Activated CD4-positive, alpha-beta T cell treated with anti-CD3 and anti-CD28 coated beads for 36 hours (primary cell): ENCODE measurements at regions of chr17 and their contacts with region 1.

Region 1: DNA sequence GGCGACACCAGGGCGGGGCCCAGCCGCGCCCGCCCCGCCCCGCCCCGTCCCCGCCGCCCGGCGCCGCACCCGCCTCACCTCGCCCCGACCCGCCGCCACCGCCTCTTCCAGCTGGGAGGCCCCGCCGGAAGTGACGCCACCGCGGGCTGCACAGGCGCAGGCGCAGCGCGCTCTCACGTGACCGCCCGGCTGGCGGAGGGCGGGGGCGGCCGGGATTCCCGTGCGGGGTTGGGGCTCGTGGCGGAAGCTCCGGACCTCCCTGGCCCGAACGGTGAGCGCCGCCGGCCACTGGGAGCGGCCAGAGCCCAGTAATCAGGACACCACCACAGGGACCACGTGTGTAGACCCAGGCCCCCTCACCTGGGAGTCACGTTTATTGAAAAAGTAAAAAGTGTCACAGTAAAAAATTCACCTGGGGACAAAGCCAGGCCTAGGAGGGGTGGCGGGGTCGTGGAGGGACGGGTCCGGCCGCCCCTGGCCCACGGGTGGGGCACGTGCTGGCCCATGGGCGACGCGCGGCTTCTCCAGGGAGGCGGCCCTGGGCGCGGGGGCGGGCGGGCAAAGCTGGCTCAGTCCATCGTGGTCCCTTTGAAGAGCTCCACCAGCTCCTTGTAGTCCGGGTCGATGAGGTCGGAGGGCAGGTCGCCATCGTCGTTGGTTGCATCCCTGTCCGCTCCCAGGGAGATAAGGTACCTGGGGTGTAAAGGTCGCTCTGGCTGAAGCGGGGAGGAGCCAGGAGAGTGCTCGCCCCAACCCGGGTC is at the start of gene MCRIP1:
- DNase-seq: peak; percentile 98
- ATAC-seq: peak; percentile 78
- H3K4me3 Mint-ChIP-seq: peak within 1 kb of the TSS; percentile 87
- H3K27ac Mint-ChIP-seq: peak within 1 kb of the TSS; percentile 91
- H3K4me1 Mint-ChIP-seq: peaks cover 17% of the 10 kb centered on the region
- H3K27me3 Mint-ChIP-seq: no peaks in the 10 kb centered on the region
- total RNA-seq, gene MCRIP1: 45.8 to 50.4 TPM

Region 2: GRCh38 chr17:81346090-81346907 is 487.0 kb before region 1 on chr17:
- CTCF ChIA-PET with region 1: no interaction called
- POLR2A ChIA-PET with region 1: no interaction called
- intact Hi-C with region 1: loop called in 1 of 2 experiments (anchors 2 kb)
- DNase-seq: peak; percentile 98
- ATAC-seq: peak; percentile 93
- H3K4me3 Mint-ChIP-seq: peak overlapping the region; percentile 26
- H3K27ac Mint-ChIP-seq: no peak overlapping the region
- H3K4me1 Mint-ChIP-seq: peaks cover 19% of the 10 kb centered on the region
- H3K27me3 Mint-ChIP-seq: peaks cover 25% of the 10 kb centered on the region

Region 3: GRCh38 chr17:81508639-81509206 is 324.6 kb before region 1 on chr17:
- CTCF ChIA-PET with region 1: no interaction called
- POLR2A ChIA-PET with region 1: no interaction called
- intact Hi-C with region 1: no loop called
- DNase-seq: peak; percentile 22
- ATAC-seq: no peak
- H3K4me3 Mint-ChIP-seq: peak overlapping the region; percentile 97
- H3K27ac Mint-ChIP-seq: peak overlapping the region; percentile 86
- H3K4me1 Mint-ChIP-seq: peaks cover 12% of the 10 kb centered on the region
- H3K27me3 Mint-ChIP-seq: no peaks in the 10 kb centered on the region

Region 4: DNA sequence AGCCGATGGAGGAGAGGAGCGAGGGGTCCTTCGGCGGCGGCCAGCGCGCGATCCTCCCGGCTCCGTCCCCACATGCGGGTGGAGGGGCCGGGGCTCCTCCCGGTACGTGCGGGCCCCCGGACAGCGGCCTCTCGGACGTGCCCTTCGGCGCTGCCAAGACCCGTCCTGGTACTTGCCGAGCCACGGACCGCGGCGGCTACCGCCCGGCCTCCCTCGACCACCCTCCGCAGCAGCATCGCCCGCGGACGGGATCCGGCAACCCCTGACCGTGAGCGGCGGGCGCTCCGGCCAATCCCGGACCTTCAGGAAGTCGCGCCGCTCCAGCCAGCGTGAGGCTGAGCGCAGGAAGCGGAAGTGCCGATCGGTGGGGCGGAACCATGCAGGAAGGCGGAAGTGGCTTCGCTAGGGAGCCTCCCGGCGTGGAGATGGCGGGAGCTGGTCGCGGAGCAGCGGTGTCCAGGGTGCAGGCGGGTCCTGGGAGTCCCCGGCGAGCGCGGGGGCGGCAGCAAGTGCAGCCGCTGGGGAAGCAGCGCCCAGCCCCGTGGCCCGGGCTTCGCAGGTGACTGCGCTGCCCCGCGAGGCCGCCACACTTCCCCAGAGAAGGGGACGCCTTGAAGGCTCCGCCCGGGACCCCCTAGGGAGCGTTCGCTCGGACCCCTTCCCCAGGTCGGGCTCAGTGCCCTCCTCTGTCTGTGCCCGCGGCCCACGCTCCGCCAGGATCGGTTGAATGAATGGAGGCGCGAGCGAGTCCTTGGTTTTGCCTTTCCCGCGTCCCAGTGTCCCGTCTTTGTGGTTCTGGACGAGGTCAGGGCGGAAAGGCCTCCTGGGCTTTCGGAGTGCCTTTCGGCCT is 166.8 kb before region 1 on chr17 and contains the starts of genes CCDC137 and OXLD1:
- CTCF ChIA-PET with region 1: interaction called, 3 read pairs
- POLR2A ChIA-PET with region 1: no interaction called
- intact Hi-C with region 1: loop called in 1 of 2 experiments (anchors 1 kb)
- DNase-seq: peak; percentile 97
- ATAC-seq: peak; percentile 91
- H3K4me3 Mint-ChIP-seq: peak within 1 kb of the TSS; percentile 91
- H3K27ac Mint-ChIP-seq: peak within 1 kb of the TSS; percentile 97
- H3K4me1 Mint-ChIP-seq: peaks cover 53% of the 10 kb centered on the region
- H3K27me3 Mint-ChIP-seq: no peaks in the 10 kb centered on the region
- total RNA-seq, gene CCDC137: 30.0 to 36.6 TPM
- total RNA-seq, gene OXLD1: 29.4 to 45.3 TPM

Region 5: GRCh38 chr17:81733507-81734404 is 99.6 kb before region 1 on chr17:
- CTCF ChIA-PET with region 1: interaction called, 3 read pairs
- POLR2A ChIA-PET with region 1: interaction called, 3 read pairs
- intact Hi-C with region 1: loop called in 1 of 2 experiments (anchors 1 kb)
- DNase-seq: peak; percentile 87
- ATAC-seq: peak; percentile 96
- H3K4me3 Mint-ChIP-seq: no peak overlapping the region
- H3K27ac Mint-ChIP-seq: no peak overlapping the region
- H3K4me1 Mint-ChIP-seq: peaks cover 7% of the 10 kb centered on the region
- H3K27me3 Mint-ChIP-seq: peaks cover 16% of the 10 kb centered on the region

Region 6: DNA sequence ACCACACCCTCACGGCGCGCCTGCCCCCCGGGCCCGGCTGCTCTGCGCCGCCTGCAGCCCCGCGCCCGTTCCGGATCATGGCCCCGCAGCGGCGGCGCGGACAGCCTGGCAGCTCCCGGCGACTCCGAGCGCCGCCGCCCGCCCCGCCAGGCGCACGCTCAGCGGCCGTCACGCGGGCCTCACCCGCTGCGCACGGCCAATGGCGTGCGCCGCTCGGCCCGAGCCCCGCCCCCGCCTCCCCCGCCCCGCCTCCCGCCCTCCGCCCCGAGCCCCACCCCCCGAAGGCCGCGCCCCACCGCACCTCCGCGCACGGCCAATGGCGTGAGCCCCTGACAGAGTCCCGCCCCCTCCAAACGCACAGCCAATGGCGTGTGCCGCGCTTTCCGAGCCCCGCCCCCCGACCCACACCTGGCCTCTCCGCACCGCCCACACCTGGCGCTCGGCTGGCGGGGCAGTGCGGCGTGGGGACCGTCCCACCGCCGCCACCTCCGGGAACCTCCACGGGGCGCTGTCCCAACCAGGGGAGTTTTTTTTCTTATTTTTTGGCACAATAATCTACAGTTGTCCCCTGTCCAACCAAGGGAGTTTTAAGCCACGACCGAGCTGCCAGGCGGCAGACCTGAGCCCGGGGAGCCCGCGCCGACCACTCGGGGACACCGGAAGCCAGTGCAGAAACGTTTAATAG is 78.1 kb after region 1 on chr17 and contains the start of gene PCYT2:
- CTCF ChIA-PET with region 1: no interaction called
- POLR2A ChIA-PET with region 1: no interaction called
- intact Hi-C with region 1: loop called in 1 of 2 experiments (anchors 1 kb)
- DNase-seq: peak; percentile 97
- ATAC-seq: peak; percentile 96
- H3K4me3 Mint-ChIP-seq: peak within 1 kb of the TSS; percentile 79
- H3K27ac Mint-ChIP-seq: no peak within 1 kb of the TSS
- H3K4me1 Mint-ChIP-seq: peaks cover 14% of the 10 kb centered on the region
- H3K27me3 Mint-ChIP-seq: no peaks in the 10 kb centered on the region
- total RNA-seq, gene PCYT2: 19.7 to 24.0 TPM

Region 7: DNA sequence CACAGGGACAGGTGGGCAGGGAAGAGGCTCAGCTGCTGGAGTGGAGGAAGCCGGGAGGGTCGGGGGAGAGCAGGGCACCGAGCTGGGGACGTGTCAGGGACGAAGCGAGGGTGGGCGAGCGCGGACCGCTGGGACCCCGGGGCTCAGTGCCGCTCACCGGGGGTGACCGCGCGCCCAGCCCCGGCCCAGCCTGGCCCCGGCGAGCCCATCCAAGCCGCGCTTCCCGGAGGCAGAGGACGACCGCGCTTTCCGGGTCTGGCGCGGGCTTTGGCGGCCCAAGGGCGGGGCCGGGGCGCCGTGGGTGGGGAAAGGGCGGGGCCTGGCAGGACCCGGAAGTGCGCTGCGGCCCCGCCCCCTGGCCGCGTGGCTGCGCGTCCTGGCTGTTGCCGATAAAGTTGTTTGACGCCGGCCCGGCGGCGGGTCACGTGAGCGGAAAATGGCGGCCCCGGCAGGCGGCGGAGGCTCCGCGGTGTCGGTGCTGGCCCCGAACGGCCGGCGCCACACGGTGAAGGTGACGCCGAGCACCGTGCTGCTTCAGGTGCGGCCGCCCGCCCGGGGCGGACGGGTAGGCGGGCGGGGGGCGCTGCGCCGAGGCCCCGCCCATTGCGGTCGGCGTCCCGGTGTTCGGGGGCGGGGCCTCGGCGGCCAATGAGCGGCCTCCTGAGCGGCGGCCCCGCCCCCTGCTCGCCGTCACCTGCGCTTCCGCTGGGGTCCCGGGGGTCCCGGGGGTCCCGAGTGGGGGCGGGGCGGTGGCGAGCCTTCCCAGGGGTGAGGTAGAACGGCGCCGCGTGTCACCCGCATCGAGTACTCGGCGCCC is 144.1 kb after region 1 on chr17 and contains the start of gene ASPSCR1:
- CTCF ChIA-PET with region 1: no interaction called
- POLR2A ChIA-PET with region 1: no interaction called
- intact Hi-C with region 1: loop called in 1 of 2 experiments (anchors 1 kb)
- DNase-seq: peak; percentile 95
- ATAC-seq: peak; percentile 83
- H3K4me3 Mint-ChIP-seq: peak within 1 kb of the TSS; percentile 94
- H3K27ac Mint-ChIP-seq: peak within 1 kb of the TSS; percentile 98
- H3K4me1 Mint-ChIP-seq: peaks cover 32% of the 10 kb centered on the region
- H3K27me3 Mint-ChIP-seq: no peaks in the 10 kb centered on the region
- total RNA-seq, gene ASPSCR1: 23.3 to 26.5 TPM

Region 8: DNA sequence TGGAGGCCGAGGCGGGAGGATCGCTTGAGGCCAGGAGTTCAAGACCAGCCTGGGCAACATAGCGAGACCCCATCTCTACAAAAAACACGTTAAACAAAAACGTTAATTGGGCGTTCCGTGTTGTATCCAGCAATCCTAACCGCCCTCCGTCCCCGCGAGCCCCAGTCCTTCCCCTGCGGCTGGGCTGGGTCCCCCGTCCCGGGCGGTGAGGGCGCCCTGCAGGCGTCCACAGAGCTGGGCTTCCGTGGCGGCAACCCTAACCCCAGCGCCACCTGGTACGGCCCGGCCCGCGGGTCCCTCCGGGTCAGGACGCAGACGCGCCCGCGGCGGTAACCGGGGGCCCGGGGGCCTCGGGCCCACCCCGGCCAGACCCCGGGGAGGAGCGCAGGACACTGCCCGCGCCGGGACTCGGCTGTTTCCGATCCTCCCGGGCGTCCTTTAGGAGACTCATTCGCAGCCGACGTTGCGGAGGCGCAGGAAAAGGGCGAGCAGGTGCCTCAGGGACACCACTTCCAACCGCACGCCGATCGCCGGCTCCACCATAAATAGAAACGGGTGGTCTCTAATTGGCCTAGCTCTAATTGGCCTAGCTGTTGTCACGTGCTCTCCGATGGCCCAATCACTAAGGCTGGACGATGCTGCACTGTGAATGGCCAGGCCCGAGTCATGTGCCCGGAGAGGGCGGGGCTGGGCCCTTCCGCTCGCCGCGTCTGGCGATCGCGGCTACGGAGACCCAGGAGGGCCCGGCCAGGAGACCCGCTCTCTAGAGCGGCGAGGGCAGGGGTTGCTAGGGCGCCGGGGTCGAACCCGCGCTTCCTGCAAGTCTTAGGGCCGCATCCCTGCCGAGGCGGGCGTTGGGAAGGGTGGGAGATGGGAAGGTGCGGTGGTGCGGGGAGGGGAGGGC is 459.2 kb after region 1 on chr17:
- CTCF ChIA-PET with region 1: no interaction called
- POLR2A ChIA-PET with region 1: no interaction called
- intact Hi-C with region 1: loop called in 1 of 2 experiments (anchors 1 kb)
- DNase-seq: peak; percentile 96
- ATAC-seq: peak; percentile 89
- H3K4me3 Mint-ChIP-seq: peak overlapping the region; percentile 78
- H3K27ac Mint-ChIP-seq: peak overlapping the region; percentile 85
- H3K4me1 Mint-ChIP-seq: peaks cover 71% of the 10 kb centered on the region
- H3K27me3 Mint-ChIP-seq: no peaks in the 10 kb centered on the region